ENCODE measurements at regions of chr19 and their contacts with region 1.

Region 1: DNA sequence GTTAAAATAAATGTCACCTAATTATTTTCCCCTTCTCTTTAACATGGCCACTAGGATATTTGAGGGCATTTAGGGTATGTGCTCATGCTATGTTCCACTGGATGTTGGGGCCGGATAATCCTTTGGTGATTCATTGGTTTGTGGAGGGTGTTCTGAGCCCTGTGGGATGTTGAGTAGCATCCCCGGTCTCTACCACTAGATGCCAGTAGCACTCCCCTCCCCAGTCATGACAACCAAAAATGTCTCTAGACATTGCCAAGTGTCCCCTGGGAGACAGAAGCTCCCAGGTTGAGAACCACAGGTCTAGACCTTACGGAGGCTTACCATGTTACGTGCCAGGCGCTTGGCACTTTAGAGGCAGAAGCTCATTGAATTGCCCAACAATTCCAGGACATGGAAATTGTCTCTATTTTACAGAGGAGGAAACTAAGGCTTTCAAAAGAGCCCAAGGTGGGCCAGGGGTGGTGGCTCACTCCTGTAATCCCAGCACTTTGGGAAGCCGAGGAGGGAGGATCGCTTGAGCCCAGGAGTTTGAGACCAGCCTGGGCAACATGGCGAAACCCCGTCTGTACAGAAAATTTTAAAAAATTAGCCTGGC is 14.1 kb downstream of the SHANK1 start:
- DNase-seq: peak; percentile 87
- H3K4me3 ChIP-seq: no peak overlapping the region; a peak in 1 of 4 replicates
- H3K27ac ChIP-seq: no peak overlapping the region
- H3K4me1 ChIP-seq: no peaks in the 10 kb centered on the region
- H3K27me3 ChIP-seq: no peaks in the 10 kb centered on the region
- CTCF ChIP-seq: peak; percentile 75
- EP300 ChIP-seq: no peak
- RAD21 ChIP-seq: peak; percentile 75

Region 2: DNA sequence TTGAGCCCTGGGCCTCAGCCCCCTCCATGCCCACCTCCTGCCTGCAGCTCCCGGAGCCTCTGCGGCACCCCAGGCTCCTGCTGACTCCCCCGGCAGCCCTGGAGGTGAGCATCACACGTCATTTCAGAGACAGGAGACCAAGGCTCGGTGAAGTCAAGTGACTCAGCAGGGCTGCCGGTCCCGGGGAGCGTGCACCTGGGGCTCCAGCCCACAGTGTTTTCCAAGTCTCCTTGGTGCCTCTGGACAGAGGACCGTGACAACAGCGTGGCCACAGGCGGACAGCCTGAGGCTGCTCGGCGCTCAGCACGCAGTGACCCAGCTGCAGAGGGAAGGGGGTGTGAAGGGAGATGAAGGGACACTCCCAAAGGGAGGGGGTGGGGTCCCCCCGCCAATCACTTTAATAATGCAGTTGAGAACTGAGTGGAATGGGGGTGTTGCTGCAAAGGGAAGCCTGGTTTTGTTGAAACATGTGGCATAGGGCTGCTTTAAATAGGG is 174.4 kb before region 1 on chr19:
- CTCF ChIA-PET with region 1: no interaction called
- POLR2A ChIA-PET with region 1: no interaction called
- DNase-seq: no peak
- H3K4me3 ChIP-seq: no peak overlapping the region
- H3K27ac ChIP-seq: no peak overlapping the region
- H3K4me1 ChIP-seq: peaks cover 0 to 3% of the 10 kb centered on the region in 2 experiments; a peak in 1 of 4 replicates
- H3K27me3 ChIP-seq: no peaks in the 10 kb centered on the region
- CTCF ChIP-seq: no peak
- EP300 ChIP-seq: no peak
- RAD21 ChIP-seq: no peak

Region 3: DNA sequence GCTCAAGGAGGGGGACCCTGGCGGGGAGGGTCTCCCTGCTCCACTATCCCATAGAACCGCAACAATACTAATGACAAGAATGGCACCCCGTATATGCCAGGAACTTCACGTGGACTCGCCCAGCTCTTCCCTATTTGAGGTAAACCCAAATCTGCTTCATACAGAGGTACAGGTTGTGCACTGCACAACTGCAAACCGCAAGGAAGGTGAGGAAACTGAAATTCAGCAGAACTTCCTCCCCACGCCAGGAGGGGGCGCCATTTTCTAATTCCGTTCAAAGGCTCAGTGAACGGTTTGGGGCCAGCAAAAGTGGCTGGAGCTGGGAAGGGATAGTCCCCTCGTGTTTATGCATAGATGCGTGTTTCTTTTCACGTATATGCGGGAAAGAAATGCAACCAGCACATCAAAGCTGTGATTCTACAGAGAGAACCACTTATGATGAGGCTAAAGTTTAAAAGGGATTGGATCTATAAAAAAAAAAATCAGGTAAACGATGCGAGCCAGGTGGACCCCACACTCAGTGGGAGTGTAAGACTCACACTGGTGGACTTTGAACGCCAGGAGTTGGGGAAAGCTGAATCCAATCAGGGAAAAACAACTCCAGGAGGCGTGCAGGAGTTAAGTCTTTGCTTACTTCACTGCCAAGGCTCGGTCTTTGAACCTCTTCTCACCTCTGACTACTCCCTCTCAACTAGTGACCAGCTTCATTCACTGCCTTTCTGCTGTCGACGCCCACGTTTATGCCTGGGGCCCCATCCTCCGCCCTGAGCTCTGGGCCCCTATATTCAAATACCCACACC is 36.0 kb before region 1 on chr19:
- CTCF ChIA-PET with region 1: interaction called, 12 read pairs
- POLR2A ChIA-PET with region 1: no interaction called
- DNase-seq: peak; percentile 78
- H3K4me3 ChIP-seq: no peak overlapping the region
- H3K27ac ChIP-seq: no peak overlapping the region
- H3K4me1 ChIP-seq: no peaks in the 10 kb centered on the region
- H3K27me3 ChIP-seq: no peaks in the 10 kb centered on the region
- CTCF ChIP-seq: peak; percentile 87
- EP300 ChIP-seq: no peak
- RAD21 ChIP-seq: peak; percentile 60

Region 4: DNA sequence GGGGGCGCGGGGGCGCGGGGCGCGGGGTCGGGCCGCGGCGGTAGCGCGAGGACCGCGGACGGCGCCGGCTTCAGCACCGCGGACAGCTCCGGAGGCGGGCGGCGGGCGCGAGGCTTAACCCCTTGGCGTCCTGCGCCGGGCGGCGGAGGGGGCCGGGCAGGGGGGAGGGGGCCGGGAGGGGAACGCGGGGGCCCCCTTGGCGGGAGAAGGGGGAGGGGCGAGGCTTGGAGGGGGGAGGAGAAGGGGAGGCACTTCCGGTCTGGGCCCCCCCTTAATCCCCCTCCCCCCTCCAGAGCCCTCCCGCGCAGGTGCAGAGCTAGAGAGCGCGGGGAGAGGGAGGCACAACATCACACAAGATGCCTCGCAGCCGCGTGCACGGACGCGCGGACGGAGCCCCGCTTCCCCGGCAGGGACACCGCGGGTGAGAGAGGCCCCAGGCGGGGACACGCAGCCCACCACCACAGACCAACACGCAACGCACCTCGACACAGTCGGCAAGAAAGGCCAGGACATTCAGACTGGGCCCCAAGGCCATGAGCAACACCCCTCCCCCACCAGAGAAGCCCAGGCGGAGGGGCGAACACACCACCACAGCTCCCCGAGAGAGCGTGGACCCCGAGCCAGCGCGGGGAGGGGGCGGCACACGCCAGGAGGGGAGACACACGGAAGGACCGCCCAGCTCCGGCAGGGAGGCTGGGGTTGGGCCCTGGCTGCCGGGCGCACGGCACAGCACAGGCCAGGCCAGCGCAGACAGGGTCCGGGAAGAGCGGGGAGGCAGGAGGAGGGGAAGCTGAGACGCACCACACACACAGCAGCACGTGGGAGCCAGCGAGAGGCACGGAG is 10.0 kb before region 1 on chr19:
- CTCF ChIA-PET with region 1: interaction called, 20 read pairs
- POLR2A ChIA-PET with region 1: interaction called, 3 read pairs
- DNase-seq: peak; percentile 97
- H3K4me3 ChIP-seq: peak overlapping the region in 1 of 2 experiments; percentile 43; a peak in 2 of 4 replicates
- H3K27ac ChIP-seq: peak overlapping the region in 1 of 2 experiments; percentile 90; a peak in 2 of 4 replicates
- H3K4me1 ChIP-seq: peaks cover 0 to 8% of the 10 kb centered on the region in 2 experiments; a peak in 1 of 4 replicates
- H3K27me3 ChIP-seq: peaks cover 19% of the 10 kb centered on the region
- CTCF ChIP-seq: no peak
- EP300 ChIP-seq: no peak
- RAD21 ChIP-seq: no peak

Region 5: GRCh38 chr19:50717026-50717723 is 11.7 kb after region 1 on chr19:
- CTCF ChIA-PET with region 1: interaction called, 13 read pairs
- POLR2A ChIA-PET with region 1: interaction called, 3 read pairs
- DNase-seq: no peak
- H3K4me3 ChIP-seq: no peak overlapping the region
- H3K27ac ChIP-seq: no peak overlapping the region
- H3K4me1 ChIP-seq: peaks cover 0 to 4% of the 10 kb centered on the region in 2 experiments; a peak in 1 of 4 replicates
- H3K27me3 ChIP-seq: no peaks in the 10 kb centered on the region
- CTCF ChIP-seq: no peak
- EP300 ChIP-seq: no peak
- RAD21 ChIP-seq: no peak

Region 6: GRCh38 chr19:50724522-50725217 is 19.1 kb after region 1 on chr19:
- CTCF ChIA-PET with region 1: interaction called, 40 read pairs
- POLR2A ChIA-PET with region 1: interaction called, 3 read pairs
- DNase-seq: peak; percentile 100
- H3K4me3 ChIP-seq: peak overlapping the region; percentile 62 to 83
- H3K27ac ChIP-seq: peak overlapping the region; percentile 46 to 86; a peak in 3 of 4 replicates
- H3K4me1 ChIP-seq: peaks cover 0 to 21% of the 10 kb centered on the region in 2 experiments; a peak in 2 of 4 replicates
- H3K27me3 ChIP-seq: no peaks in the 10 kb centered on the region
- CTCF ChIP-seq: peak; percentile 83
- EP300 ChIP-seq: no peak
- RAD21 ChIP-seq: peak; percentile 55

Region 7: GRCh38 chr19:50768277-50768676 is 62.8 kb after region 1 on chr19:
- CTCF ChIA-PET with region 1: no interaction called
- POLR2A ChIA-PET with region 1: no interaction called
- DNase-seq: no peak
- H3K4me3 ChIP-seq: no peak overlapping the region
- H3K27ac ChIP-seq: no peak overlapping the region
- H3K4me1 ChIP-seq: no peaks in the 10 kb centered on the region
- H3K27me3 ChIP-seq: no peaks in the 10 kb centered on the region
- CTCF ChIP-seq: no peak
- EP300 ChIP-seq: no peak
- RAD21 ChIP-seq: no peak

Measured in SK-N-SH (cell line).